Activated naive CD4-positive, alpha-beta T cell treated with anti-CD3 and anti-CD28 coated beads for 36 hours (primary cell): ENCODE measurements at regions of chr9 and their contacts with region 1.

Region 1: GRCh38 chr9:137188490-137189296 is at the starts of genes ANAPC2 and SSNA1:
- DNase-seq: peak; percentile 92
- H3K4me3 Mint-ChIP-seq: peak within 1 kb of the TSS; percentile 92
- H3K27ac Mint-ChIP-seq: peak within 1 kb of the TSS; percentile 88
- H3K4me1 Mint-ChIP-seq: peaks cover 39% of the 10 kb centered on the region
- H3K27me3 Mint-ChIP-seq: no peaks in the 10 kb centered on the region
- total RNA-seq, gene ANAPC2: 34.8 to 36.6 TPM
- total RNA-seq, gene SSNA1: 48.2 to 49.9 TPM

Region 2: GRCh38 chr9:137200311-137201204 is 11.9 kb after region 1 on chr9 and contains the start of gene TPRN:
- CTCF ChIA-PET with region 1: interaction called, 16 read pairs
- intact Hi-C with region 1: loop called (anchors 1 kb)
- DNase-seq: peak; percentile 99
- H3K4me3 Mint-ChIP-seq: peak within 1 kb of the TSS; percentile 80
- H3K27ac Mint-ChIP-seq: peak within 1 kb of the TSS; percentile 56
- H3K4me1 Mint-ChIP-seq: peaks cover 33% of the 10 kb centered on the region
- H3K27me3 Mint-ChIP-seq: no peaks in the 10 kb centered on the region
- total RNA-seq, gene TPRN: 2.1 to 2.6 TPM

Region 3: GRCh38 chr9:137339045-137339907 is 150.6 kb after region 1 on chr9:
- CTCF ChIA-PET with region 1: no interaction called
- intact Hi-C with region 1: no loop called
- DNase-seq: no peak
- H3K4me3 Mint-ChIP-seq: no peak overlapping the region
- H3K27ac Mint-ChIP-seq: no peak overlapping the region
- H3K4me1 Mint-ChIP-seq: no peaks in the 10 kb centered on the region
- H3K27me3 Mint-ChIP-seq: no peaks in the 10 kb centered on the region